ENCODE measurements at regions of chr19 and their contacts with region 1.

Region 1: DNA sequence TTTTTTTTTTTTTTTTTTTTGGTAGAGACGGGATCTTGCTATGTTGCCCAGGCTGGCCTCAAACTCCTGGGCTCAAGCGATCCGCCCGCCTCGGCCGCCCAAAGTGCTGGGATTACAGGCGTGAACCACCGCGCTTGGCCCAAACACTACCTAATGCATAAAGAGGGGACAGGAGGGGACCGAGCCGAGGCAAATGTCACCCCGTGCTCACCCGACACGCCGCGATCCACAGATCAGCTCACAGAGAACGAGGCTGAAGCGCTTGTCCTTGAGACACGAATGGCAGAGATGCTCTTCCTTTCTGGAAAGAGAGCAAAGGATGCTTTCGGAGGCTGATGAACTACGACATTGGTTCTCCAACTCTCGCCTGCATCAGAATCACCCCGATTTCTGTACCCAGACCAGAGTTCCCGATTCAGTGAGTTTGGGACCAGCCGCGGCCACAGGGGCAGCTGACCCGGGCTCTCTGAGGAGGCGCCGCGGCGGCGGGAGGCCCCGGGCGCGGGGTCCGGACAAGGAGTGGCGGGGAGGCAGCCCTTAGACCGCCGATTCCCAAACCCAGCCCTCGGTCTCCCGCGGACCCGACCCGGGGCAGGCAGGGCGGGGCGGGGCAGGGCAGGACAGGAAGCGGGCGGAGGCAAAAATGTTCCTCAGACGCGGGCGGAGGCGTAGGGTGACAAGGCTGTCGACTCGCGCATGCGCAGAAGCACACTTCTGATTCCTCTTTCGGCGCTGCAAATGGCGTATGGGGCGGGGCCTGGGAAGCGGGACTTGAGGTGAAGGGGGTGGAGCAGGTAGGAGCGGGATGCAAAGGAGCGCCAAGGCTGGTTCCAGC is at the start of gene ZNF699:
- DNase-seq: peak; percentile 94 to 98 (median 94)
- ATAC-seq: peak; percentile 95
- H3K4me3 ChIP-seq: peak within 1 kb of the TSS; percentile 99
- H3K27ac ChIP-seq: peak within 1 kb of the TSS; percentile 84
- H3K4me1 ChIP-seq: peaks cover 3 to 6% of the 10 kb centered on the region in 2 experiments; a peak in 2 of 5 replicates
- H3K27me3 ChIP-seq: no peaks in the 10 kb centered on the region
- CTCF ChIP-seq: no peak
- EP300 ChIP-seq: no peak
- POLR2A ChIP-seq: peak; percentile 80
- RAD21 ChIP-seq: no peak
- polyA plus RNA-seq, gene ZNF699: 0.08 to 0.25 TPM

Region 2: DNA sequence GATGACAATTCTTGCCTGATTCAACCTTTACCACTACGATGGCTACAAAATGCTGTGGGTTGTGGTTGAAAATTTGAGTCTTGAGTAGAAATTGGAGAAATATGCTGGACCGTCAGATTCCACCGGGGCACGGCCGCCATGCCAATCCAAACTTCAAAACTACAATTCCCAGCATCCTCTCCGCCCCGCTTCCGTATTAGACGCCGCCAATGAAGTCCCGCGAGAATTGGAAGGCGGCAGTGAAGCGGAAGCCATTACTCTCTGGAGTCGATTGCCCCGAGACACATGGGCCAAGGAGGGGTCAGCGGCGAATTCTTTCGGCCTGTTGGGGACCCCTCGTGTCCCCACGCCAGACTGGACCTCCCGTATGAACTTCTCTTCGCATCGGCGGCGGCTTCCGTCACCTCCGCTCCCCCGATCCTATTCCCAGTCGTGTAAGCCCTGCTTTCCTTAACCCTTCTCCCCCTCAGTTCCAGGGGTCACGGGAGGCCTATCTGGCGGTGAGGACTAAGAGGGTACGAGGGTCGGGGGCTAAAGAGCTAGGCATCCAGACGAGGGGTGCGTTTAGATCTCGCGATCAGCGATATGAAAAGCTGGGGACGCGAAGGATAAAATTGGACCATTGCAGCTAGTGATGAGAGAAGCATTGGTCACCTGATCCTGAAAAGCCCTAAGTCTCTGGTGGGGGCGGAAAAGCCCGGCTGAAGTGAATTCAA is 169.0 kb before region 1 on chr19 and contains the start of gene ZNF317:
- CTCF ChIA-PET with region 1: no interaction called
- POLR2A ChIA-PET with region 1: no interaction called
- in situ Hi-C with region 1: no loop called
- intact Hi-C with region 1: loop called (anchors 5 kb)
- DNase-seq: peak; percentile 81 to 96 (median 85)
- ATAC-seq: peak; percentile 97
- H3K4me3 ChIP-seq: peak within 1 kb of the TSS; percentile 61
- H3K27ac ChIP-seq: peak within 1 kb of the TSS; percentile 92
- H3K4me1 ChIP-seq: peaks cover 0 to 9% of the 10 kb centered on the region in 2 experiments; a peak in 2 of 5 replicates
- H3K27me3 ChIP-seq: no peaks in the 10 kb centered on the region
- CTCF ChIP-seq: no peak; a peak in 1 of 6 replicates
- EP300 ChIP-seq: no peak
- POLR2A ChIP-seq: peak; percentile 95
- RAD21 ChIP-seq: no peak
- polyA plus RNA-seq, gene ZNF317: 23.9 to 37.9 TPM

Region 3: DNA sequence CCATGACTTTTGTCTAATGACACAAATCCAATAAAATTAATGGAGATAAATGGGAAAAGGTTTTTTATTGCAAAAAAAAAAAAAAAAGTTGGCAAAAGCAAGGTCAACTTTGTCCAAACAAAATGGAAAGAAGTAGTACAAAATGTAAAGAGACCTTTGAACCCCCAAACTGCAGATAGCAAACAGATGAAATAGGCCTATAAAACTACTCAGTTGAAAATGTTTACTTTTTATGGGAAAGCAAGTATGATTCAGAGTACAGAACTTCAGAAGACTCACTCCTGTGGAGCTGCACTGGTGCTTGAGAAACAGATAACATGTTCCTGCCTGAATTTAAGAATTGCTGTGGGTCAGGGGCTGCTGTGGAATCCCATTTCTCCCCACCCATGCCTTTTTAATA is 43.7 kb after region 1 on chr19:
- CTCF ChIA-PET with region 1: no interaction called
- POLR2A ChIA-PET with region 1: no interaction called
- in situ Hi-C with region 1: no loop called
- intact Hi-C with region 1: no loop called
- DNase-seq: no peak
- ATAC-seq: no peak
- H3K4me3 ChIP-seq: no peak overlapping the region
- H3K27ac ChIP-seq: no peak overlapping the region
- H3K4me1 ChIP-seq: no peaks in the 10 kb centered on the region
- H3K27me3 ChIP-seq: no peaks in the 10 kb centered on the region
- CTCF ChIP-seq: no peak
- EP300 ChIP-seq: no peak
- POLR2A ChIP-seq: no peak
- RAD21 ChIP-seq: no peak

Region 4: DNA sequence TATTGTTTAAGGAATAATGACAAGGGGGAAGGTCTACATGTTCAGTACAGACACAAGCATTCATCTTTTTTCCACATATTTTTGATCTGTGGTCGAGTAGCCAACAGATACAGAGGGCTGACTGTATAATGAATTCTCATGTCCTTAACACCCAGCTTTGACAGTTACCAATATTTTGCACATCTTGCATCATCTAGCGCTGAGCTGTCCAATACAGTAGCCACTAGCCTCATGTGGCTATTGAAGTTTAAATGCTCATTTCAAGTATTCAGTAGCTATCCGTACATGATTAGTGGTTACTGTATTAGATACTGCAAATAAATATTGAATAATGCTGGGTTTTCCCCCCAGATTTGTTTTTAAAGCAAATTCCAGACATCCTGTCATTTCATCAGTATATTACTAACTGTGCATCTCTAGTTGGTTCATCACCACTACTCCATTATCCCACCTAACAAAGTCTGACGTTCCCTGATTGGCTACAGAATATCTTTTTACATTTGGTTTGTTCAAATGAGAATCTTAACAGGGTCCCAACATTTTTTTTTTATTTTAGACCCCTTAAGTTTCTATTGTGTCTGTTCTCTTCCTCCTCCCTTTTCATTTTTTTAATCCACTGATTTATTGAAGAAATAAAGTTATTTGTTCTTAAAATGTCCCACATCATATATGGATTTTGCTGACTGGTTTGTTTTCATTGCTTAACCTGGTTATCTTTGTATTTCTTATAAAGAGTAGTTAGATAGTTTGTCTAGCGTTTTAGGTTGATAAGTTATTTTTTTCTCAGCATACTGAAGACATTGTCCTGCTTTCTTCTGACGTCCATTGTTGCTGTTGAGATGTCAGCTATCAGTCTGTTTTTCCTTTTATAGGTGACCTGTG is 61.6 kb after region 1 on chr19:
- CTCF ChIA-PET with region 1: no interaction called
- POLR2A ChIA-PET with region 1: no interaction called
- in situ Hi-C with region 1: no loop called
- intact Hi-C with region 1: no loop called
- DNase-seq: peak in 1 of 4 experiments; percentile 3
- ATAC-seq: peak; percentile 66
- H3K4me3 ChIP-seq: no peak overlapping the region
- H3K27ac ChIP-seq: no peak overlapping the region
- H3K4me1 ChIP-seq: no peaks in the 10 kb centered on the region
- H3K27me3 ChIP-seq: no peaks in the 10 kb centered on the region
- CTCF ChIP-seq: no peak
- EP300 ChIP-seq: peak; percentile 36; the same call in 1 of the 2 replicates
- POLR2A ChIP-seq: no peak
- RAD21 ChIP-seq: no peak

Measured in K562 (cell line).